ENCODE measurements at regions of chr2 and their contacts with region 1.

Region 1: DNA sequence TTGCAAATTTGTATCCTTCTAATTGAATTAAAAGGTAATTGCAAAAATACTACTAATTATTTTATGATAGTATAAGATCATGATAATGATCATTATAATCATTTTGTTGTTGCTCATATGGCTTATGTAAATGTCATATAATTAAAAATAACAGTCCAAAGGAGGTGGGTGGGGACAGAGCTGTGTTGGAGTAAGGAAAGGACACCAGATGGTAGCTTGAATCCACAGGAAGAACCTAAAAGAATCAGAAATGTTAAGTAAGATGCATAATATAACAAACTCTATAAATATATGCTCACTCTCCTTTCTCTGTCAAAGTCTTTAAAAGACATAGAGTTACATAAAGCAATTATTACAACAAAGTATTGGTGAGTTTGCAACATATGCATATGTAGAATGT is 650.7 kb upstream of the HS6ST1 start:
- DNase-seq: no peak

Region 2: DNA sequence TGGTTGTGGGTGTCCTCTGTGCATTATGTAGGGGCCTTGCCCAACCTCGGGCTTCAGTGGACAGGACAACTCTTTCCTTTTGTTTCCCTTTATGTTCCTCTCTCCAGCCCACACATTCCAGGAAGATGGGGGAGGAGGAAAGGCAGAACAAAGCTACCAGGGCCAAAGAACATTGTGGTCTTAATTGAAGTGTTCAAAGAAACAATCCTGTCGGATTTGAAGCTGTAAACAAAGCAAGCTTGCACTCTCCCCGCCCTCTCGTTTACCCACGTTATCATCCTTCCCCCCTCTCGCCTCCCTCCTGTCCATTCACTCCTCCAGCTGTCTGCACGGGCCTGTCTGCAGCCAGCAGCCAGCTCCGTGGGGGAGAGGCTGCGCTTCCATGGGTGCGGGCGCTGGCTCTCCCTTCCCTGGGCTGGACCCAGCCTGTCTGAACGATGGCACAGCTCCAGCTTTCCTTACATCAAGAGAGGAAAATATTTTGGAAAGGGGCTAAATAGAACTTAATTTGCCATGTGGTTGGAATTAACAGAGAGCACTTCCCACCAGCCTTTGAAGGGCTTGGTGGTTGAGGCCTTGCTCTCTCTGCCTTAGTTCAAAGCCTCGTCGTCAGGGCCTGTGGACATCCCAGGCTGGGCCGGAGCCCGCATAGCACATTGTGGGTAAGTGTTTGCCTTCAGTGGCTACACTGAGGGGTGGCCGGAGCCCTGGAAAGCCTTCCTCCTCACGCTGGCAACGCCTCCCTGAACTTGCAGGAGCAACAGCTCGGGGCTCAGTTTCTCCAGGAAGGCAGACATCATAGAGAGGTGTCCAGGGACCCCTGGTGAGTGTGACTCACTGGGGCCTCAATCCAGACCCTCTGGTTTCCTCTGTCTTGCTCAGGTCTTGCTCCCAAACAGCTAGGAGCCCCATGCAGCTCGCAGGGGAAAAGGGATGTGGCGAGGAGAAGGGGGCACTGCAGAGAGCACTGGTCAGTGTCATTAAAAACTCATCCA is 590.1 kb before region 1 on chr2:
- intact Hi-C with region 1: no loop called
- DNase-seq: peak; percentile 83

Region 3: DNA sequence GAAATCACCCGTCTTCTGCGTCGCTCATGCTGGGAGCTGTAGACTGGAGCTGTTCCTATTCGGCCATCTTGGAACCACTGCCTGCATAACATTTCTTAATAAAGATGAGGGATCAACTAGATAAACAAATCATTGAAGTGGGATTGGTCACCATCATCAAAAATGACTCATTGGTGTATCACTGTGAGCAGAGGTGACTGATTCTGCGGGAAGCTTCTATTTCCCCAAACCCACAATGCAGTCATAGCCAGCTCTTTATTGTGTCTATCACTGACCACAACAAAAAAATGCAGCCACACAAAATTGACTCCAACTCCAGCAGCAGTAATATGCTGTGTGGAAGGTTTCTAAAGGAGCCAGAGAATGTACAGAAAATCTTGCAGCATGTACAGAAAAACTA is 20.0 kb before region 1 on chr2:
- intact Hi-C with region 1: loop called in 1 of 2 experiments (anchors 1 kb)
- DNase-seq: no peak

Region 4: GRCh38 chr2:128997166-128997866 is 27.9 kb after region 1 on chr2:
- intact Hi-C with region 1: no loop called
- DNase-seq: no peak

Region 5: DNA sequence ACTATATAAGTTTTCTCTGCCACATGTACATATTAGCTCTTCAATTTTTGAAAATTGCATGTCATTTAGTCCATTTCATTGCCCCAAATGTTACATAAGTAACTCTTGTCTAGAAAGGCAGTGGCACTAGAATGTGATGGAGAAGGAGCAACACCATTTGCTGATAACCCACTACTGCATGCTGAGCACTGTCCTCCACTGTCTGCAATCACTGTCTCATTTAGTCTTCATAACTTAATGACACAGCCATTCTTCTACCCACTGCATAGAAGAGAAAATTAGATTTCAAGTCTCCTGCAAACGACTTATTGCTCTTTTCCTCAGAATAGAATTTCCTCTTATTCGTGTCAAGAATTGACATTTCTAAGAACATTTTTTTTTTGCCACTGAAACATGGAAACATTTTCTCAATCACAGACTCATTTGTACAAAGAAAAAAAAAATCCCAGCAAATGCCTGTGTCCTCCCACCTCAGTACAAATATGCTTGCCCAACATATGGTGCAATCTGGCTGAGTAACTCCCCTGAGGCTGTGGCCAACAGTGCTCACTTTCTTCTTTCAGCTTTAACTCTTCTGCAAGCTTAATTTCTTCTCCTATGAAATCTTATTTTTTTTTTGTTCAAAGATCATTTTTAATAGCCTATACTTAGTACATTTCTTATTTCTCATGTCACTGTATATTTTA is 117.9 kb after region 1 on chr2:
- intact Hi-C with region 1: no loop called
- DNase-seq: no peak